GM12878 (cell line): ENCODE measurements at regions of chr7 and their contacts with region 1.

Region 1: GRCh38 chr7:28921822-28922221 is 36.3 kb downstream of the TRIL start:
- DNase-seq: no peak
- ATAC-seq: peak; percentile 97
- H3K4me3 ChIP-seq: no peak overlapping the region
- H3K27ac ChIP-seq: no peak overlapping the region
- H3K4me1 ChIP-seq: peaks cover 4% of the 10 kb centered on the region; the same call in 1 of the 2 replicates
- H3K27me3 ChIP-seq: peaks cover 0 to 1% of the 10 kb centered on the region in 2 experiments; a peak in 1 of 4 replicates
- CTCF ChIP-seq: peak; percentile 65 to 75 (median 72)
- EP300 ChIP-seq: no peak
- POLR2A ChIP-seq: no peak
- RAD21 ChIP-seq: peak; percentile 60

Region 2: DNA sequence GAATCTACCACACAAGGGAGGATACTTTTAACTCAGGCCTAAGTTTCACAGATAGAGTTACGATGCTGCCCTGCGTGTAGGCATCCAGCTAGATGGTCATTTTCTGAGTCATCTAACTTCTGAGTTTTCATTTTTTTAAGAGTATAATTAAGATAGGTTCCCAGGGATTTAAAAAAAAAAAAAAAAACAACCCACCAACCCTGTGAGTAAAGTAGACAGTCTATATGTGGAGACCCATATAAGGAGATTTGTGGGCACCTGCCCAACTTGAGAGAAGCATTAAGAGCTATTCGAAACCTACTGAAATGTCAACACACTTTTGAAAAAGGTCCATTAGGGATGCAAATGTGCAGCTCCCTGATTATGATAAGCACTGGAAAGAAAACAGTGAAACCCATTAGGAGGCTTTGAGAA is 221.0 kb before region 1 on chr7:
- CTCF ChIA-PET with region 1: no interaction called
- POLR2A ChIA-PET with region 1: no interaction called
- RAD21 ChIA-PET with region 1: no interaction called
- SMC1A ChIA-PET with region 1: no interaction called
- in situ Hi-C with region 1: no loop called
- intact Hi-C with region 1: no loop called
- DNase-seq: no peak
- ATAC-seq: peak; percentile 23
- H3K4me3 ChIP-seq: no peak overlapping the region
- H3K27ac ChIP-seq: no peak overlapping the region
- H3K4me1 ChIP-seq: peaks cover 18% of the 10 kb centered on the region
- H3K27me3 ChIP-seq: no peaks in the 10 kb centered on the region
- CTCF ChIP-seq: no peak
- EP300 ChIP-seq: no peak
- POLR2A ChIP-seq: no peak
- RAD21 ChIP-seq: no peak

Region 3: GRCh38 chr7:28891192-28891872 is 30.5 kb before region 1 on chr7:
- CTCF ChIA-PET with region 1: interaction called, 13 read pairs
- POLR2A ChIA-PET with region 1: no interaction called
- RAD21 ChIA-PET with region 1: no interaction called
- SMC1A ChIA-PET with region 1: interaction called, 4 read pairs
- in situ Hi-C with region 1: no loop called
- intact Hi-C with region 1: no loop called
- DNase-seq: no peak
- ATAC-seq: no peak
- H3K4me3 ChIP-seq: no peak overlapping the region
- H3K27ac ChIP-seq: no peak overlapping the region
- H3K4me1 ChIP-seq: no peaks in the 10 kb centered on the region
- H3K27me3 ChIP-seq: peaks cover 0 to 3% of the 10 kb centered on the region in 2 experiments
- CTCF ChIP-seq: no peak
- EP300 ChIP-seq: no peak
- POLR2A ChIP-seq: no peak
- RAD21 ChIP-seq: no peak

Region 4: GRCh38 chr7:28933846-28934320 is 12.1 kb after region 1 on chr7:
- CTCF ChIA-PET with region 1: interaction called, 29 read pairs
- POLR2A ChIA-PET with region 1: no interaction called
- RAD21 ChIA-PET with region 1: no interaction called
- SMC1A ChIA-PET with region 1: interaction called, 5 read pairs
- in situ Hi-C with region 1: no loop called
- intact Hi-C with region 1: no loop called
- DNase-seq: no peak
- ATAC-seq: no peak
- H3K4me3 ChIP-seq: no peak overlapping the region
- H3K27ac ChIP-seq: no peak overlapping the region
- H3K4me1 ChIP-seq: no peaks in the 10 kb centered on the region
- H3K27me3 ChIP-seq: peaks cover 0 to 4% of the 10 kb centered on the region in 2 experiments; a peak in 1 of 4 replicates
- CTCF ChIP-seq: no peak
- EP300 ChIP-seq: no peak
- POLR2A ChIP-seq: no peak
- RAD21 ChIP-seq: no peak

Region 5: GRCh38 chr7:29105752-29106668 is 184.2 kb after region 1 on chr7:
- CTCF ChIA-PET with region 1: interaction called, 375 read pairs
- POLR2A ChIA-PET with region 1: no interaction called
- RAD21 ChIA-PET with region 1: interaction called, 29 read pairs
- SMC1A ChIA-PET with region 1: interaction called, 39 read pairs
- in situ Hi-C with region 1: loop called (anchors 5 kb)
- intact Hi-C with region 1: loop called (anchors 1 kb)
- DNase-seq: no peak
- ATAC-seq: peak; percentile 88
- H3K4me3 ChIP-seq: no peak overlapping the region
- H3K27ac ChIP-seq: no peak overlapping the region
- H3K4me1 ChIP-seq: no peaks in the 10 kb centered on the region
- H3K27me3 ChIP-seq: peaks cover 3% of the 10 kb centered on the region in 2 experiments; a peak in 2 of 4 replicates
- CTCF ChIP-seq: peak; percentile 73 to 80 (median 79)
- EP300 ChIP-seq: no peak
- POLR2A ChIP-seq: no peak
- RAD21 ChIP-seq: peak; percentile 79

Region 6: DNA sequence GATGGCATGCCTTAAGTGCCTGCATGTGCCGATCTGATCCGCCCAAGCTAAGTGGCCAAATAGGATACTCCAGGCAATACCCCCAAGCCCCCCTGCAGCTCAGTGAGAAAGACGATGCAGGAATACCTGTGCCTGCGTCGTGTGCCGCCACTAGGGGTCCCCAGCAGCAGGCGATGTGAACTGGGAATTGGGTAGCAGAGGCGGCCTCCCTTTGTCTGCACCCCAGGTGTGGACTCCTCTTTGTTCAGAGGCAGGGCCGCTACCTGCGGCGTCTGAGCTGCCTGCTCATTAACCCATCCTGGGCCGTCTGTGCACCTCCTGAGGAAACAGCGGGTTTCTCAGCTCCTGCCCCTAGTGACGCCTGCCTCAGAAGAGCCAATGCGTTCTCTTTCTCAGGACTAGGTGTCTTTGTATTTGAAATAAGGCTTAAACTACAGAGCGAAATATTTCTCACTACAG is 267.9 kb after region 1 on chr7:
- CTCF ChIA-PET with region 1: interaction called, 21 read pairs
- POLR2A ChIA-PET with region 1: no interaction called
- RAD21 ChIA-PET with region 1: interaction called, 8 read pairs
- SMC1A ChIA-PET with region 1: interaction called, 8 read pairs
- in situ Hi-C with region 1: no loop called
- intact Hi-C with region 1: loop called (anchors 5 kb)
- DNase-seq: no peak
- ATAC-seq: peak; percentile 95
- H3K4me3 ChIP-seq: no peak overlapping the region
- H3K27ac ChIP-seq: no peak overlapping the region
- H3K4me1 ChIP-seq: no peaks in the 10 kb centered on the region
- H3K27me3 ChIP-seq: peaks cover 0 to 10% of the 10 kb centered on the region in 2 experiments; a peak in 3 of 4 replicates
- CTCF ChIP-seq: peak; percentile 77 to 86 (median 81)
- EP300 ChIP-seq: no peak
- POLR2A ChIP-seq: no peak
- RAD21 ChIP-seq: peak; percentile 66